ENCODE measurements at regions of chr2 and their contacts with region 1.

Region 1: DNA sequence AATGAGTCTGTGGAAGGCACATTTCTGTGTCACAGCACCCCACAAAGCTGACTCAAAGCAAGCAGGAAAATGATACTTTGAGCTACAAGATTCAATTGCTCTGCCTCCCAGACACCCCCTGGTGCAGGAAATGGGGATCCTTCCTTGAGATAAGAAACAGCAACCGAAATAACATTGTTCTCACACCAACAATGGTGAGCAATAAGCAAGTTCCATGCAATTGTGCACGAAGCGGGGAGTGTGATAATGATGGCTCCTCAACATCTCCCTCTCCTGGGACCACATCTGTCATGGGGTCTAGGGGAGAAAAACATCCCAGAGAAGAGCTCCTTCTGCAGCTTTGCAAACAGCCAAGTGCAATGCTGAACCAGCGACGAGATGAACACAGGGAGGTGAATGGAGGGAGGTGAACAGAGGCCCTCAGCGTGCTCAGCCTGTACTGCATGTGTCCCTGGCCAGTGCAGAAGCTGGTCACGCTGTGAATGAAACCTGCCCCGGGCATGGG is 67.7 kb downstream of the PDCL3 start:
- DNase-seq: no peak
- H3K4me3 ChIP-seq: no peak overlapping the region
- H3K27ac ChIP-seq: no peak overlapping the region
- H3K4me1 ChIP-seq: peaks cover 0 to 3% (median 2%) of the 10 kb centered on the region in 4 experiments; a peak in 3 of 7 replicates
- H3K27me3 ChIP-seq: no peaks in the 10 kb centered on the region
- CTCF ChIP-seq: no peak
- EP300 ChIP-seq: no peak
- POLR2A ChIP-seq: no peak
- RAD21 ChIP-seq: no peak

Region 2: DNA sequence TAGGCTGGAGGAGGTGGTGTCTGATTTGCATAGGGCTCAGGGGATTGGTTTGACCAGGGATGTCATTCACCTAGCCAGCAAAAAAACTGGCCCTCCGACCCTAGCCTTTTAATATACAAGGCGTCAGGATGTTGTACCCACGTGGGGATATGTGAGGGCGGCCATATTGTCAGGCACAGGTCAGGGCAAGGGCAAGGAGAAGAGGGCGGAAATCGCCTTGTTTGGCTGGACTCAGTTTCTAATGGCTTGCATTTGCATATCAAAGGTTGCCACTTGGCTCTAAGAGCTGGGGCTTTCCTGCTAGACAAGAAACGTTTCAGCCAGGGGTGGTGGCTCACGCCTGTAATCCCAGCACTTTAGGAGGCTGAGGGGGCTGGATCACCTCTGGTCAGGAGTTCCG is 92.6 kb before region 1 on chr2:
- CTCF ChIA-PET with region 1: no interaction called
- POLR2A ChIA-PET with region 1: no interaction called
- DNase-seq: peak; percentile 19 to 44
- H3K4me3 ChIP-seq: no peak overlapping the region
- H3K27ac ChIP-seq: no peak overlapping the region
- H3K4me1 ChIP-seq: no peaks in the 10 kb centered on the region
- H3K27me3 ChIP-seq: no peaks in the 10 kb centered on the region
- CTCF ChIP-seq: no peak
- EP300 ChIP-seq: no peak
- POLR2A ChIP-seq: no peak
- RAD21 ChIP-seq: no peak

Region 3: GRCh38 chr2:100619951-100620350 is 10.6 kb before region 1 on chr2:
- CTCF ChIA-PET with region 1: interaction called, 18 read pairs
- POLR2A ChIA-PET with region 1: no interaction called
- DNase-seq: no peak
- H3K4me3 ChIP-seq: no peak overlapping the region
- H3K27ac ChIP-seq: no peak overlapping the region
- H3K4me1 ChIP-seq: no peaks in the 10 kb centered on the region
- H3K27me3 ChIP-seq: no peaks in the 10 kb centered on the region
- CTCF ChIP-seq: no peak
- EP300 ChIP-seq: no peak
- POLR2A ChIP-seq: no peak
- RAD21 ChIP-seq: no peak

Region 4: GRCh38 chr2:100640431-100641124 is 10.1 kb after region 1 on chr2:
- CTCF ChIA-PET with region 1: interaction called, 12 read pairs
- POLR2A ChIA-PET with region 1: no interaction called
- DNase-seq: peak in 1 of 2 experiments; percentile 38
- H3K4me3 ChIP-seq: peak overlapping the region in 1 of 4 experiments; percentile 5; a peak in 1 of 8 replicates
- H3K27ac ChIP-seq: no peak overlapping the region
- H3K4me1 ChIP-seq: peaks cover 3 to 12% (median 6%) of the 10 kb centered on the region in 4 experiments
- H3K27me3 ChIP-seq: no peaks in the 10 kb centered on the region
- CTCF ChIP-seq: no peak
- EP300 ChIP-seq: no peak
- POLR2A ChIP-seq: no peak
- RAD21 ChIP-seq: no peak

Region 5: GRCh38 chr2:100857915-100858314 is 227.4 kb after region 1 on chr2:
- CTCF ChIA-PET with region 1: no interaction called
- POLR2A ChIA-PET with region 1: no interaction called
- DNase-seq: no peak
- H3K4me3 ChIP-seq: no peak overlapping the region
- H3K27ac ChIP-seq: no peak overlapping the region
- H3K4me1 ChIP-seq: peaks cover 0 to 3% (median 0%) of the 10 kb centered on the region in 4 experiments; a peak in 1 of 7 replicates
- H3K27me3 ChIP-seq: no peaks in the 10 kb centered on the region
- CTCF ChIP-seq: no peak
- EP300 ChIP-seq: no peak
- POLR2A ChIP-seq: no peak
- RAD21 ChIP-seq: no peak

Measured in H1 (cell line).